CD8-positive, alpha-beta T cell (primary cell): ENCODE measurements at regions of chr11 and their contacts with region 1.

Region 1: GRCh38 chr11:74398244-74399159 is at the start of gene PGM2L1:
- DNase-seq: peak; percentile 85 to 97 (median 95)
- ATAC-seq: peak; percentile 86
- H3K4me3 ChIP-seq: peak within 1 kb of the TSS; percentile 51 to 92
- H3K4me3 Mint-ChIP-seq: peak within 1 kb of the TSS; percentile 99
- H3K27ac ChIP-seq: peak within 1 kb of the TSS; percentile 44 to 58
- H3K27ac Mint-ChIP-seq: peak within 1 kb of the TSS; percentile 96
- H3K4me1 ChIP-seq: peaks cover 10% of the 10 kb centered on the region
- H3K4me1 Mint-ChIP-seq: peaks cover 26% of the 10 kb centered on the region
- H3K27me3 ChIP-seq: no peaks in the 10 kb centered on the region
- H3K27me3 Mint-ChIP-seq: no peaks in the 10 kb centered on the region
- CTCF ChIP-seq: no peak
- total RNA-seq, gene PGM2L1: 5.2 to 5.8 TPM

Region 2: DNA sequence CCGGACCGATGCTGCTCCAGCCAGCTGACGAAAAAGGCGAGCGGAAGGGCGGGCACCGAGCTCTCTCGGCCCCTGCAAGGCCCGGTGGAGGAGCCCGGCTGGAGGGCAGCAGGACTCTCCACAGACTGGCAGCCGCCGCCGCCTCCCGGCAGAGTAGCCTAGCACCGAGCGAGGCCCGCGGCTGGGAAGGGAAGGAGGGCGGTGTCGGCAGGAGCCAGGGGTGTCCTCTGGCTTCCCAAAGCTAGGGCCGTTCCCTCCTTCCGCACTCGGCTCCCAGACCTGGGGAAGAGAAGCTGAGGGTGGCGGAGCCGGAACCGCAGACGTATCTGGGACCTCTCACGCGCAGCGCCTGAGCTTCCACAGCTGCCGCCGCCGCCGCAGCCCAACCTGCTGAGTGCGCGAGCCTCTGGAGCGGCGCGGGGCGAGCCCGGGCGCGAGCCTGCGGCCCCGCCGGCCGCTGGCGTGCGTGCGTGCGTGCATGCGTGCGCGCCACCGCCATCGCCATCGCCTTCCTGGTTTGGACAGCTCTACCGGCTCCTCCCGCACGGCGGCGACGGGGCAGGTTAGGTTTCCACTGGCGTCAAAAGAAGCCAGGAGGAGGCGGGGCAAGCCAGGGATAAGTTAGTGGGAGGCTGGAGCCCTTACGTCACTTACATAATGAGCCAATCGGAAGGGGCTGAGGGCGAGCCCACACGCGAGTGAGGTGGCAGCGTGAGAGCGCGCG is 637.7 kb before region 1 on chr11 and contains the start of gene RAB6A:
- CTCF ChIA-PET with region 1: no interaction called
- POLR2A ChIA-PET with region 1: no interaction called
- intact Hi-C with region 1: loop called in 1 of 2 experiments (anchors 5 kb)
- DNase-seq: peak; percentile 99 to 100 (median 99)
- ATAC-seq: peak; percentile 93
- H3K4me3 ChIP-seq: peak within 1 kb of the TSS; percentile 69 to 93
- H3K4me3 Mint-ChIP-seq: peak within 1 kb of the TSS; percentile 85
- H3K27ac ChIP-seq: peak within 1 kb of the TSS; percentile 71 to 90
- H3K27ac Mint-ChIP-seq: peak within 1 kb of the TSS; percentile 95
- H3K4me1 ChIP-seq: peaks cover 17% of the 10 kb centered on the region
- H3K4me1 Mint-ChIP-seq: peaks cover 29% of the 10 kb centered on the region
- H3K27me3 ChIP-seq: no peaks in the 10 kb centered on the region
- H3K27me3 Mint-ChIP-seq: no peaks in the 10 kb centered on the region
- CTCF ChIP-seq: peak; percentile 24
- total RNA-seq, gene RAB6A: 43.7 to 53.3 TPM

Region 3: GRCh38 chr11:73779084-73779902 is 619.2 kb before region 1 on chr11:
- CTCF ChIA-PET with region 1: no interaction called
- POLR2A ChIA-PET with region 1: no interaction called
- intact Hi-C with region 1: loop called in 1 of 2 experiments (anchors 5 kb)
- DNase-seq: peak; percentile 95 to 99 (median 97)
- ATAC-seq: peak; percentile 97
- H3K4me3 ChIP-seq: peak overlapping the region; percentile 52 to 62
- H3K4me3 Mint-ChIP-seq: peak overlapping the region; percentile 97
- H3K27ac ChIP-seq: peak overlapping the region; percentile 83 to 97
- H3K27ac Mint-ChIP-seq: peak overlapping the region; percentile 100
- H3K4me1 ChIP-seq: peaks cover 4% of the 10 kb centered on the region
- H3K4me1 Mint-ChIP-seq: peaks cover 16% of the 10 kb centered on the region
- H3K27me3 ChIP-seq: no peaks in the 10 kb centered on the region
- H3K27me3 Mint-ChIP-seq: no peaks in the 10 kb centered on the region
- CTCF ChIP-seq: no peak

Region 4: GRCh38 chr11:74592441-74593362 is 194.2 kb after region 1 on chr11 and contains the start of gene POLD3:
- CTCF ChIA-PET with region 1: no interaction called
- POLR2A ChIA-PET with region 1: interaction called, 7 read pairs
- intact Hi-C with region 1: loop called (anchors 1 to 2 kb)
- DNase-seq: peak; percentile 88 to 96 (median 92)
- ATAC-seq: peak; percentile 94
- H3K4me3 ChIP-seq: peak within 1 kb of the TSS; percentile 88 to 100
- H3K4me3 Mint-ChIP-seq: peak within 1 kb of the TSS; percentile 99
- H3K27ac ChIP-seq: peak within 1 kb of the TSS; percentile 82 to 91
- H3K27ac Mint-ChIP-seq: peak within 1 kb of the TSS; percentile 97
- H3K4me1 ChIP-seq: peaks cover 11% of the 10 kb centered on the region
- H3K4me1 Mint-ChIP-seq: peaks cover 19% of the 10 kb centered on the region
- H3K27me3 ChIP-seq: no peaks in the 10 kb centered on the region
- H3K27me3 Mint-ChIP-seq: no peaks in the 10 kb centered on the region
- CTCF ChIP-seq: no peak
- total RNA-seq, gene POLD3: 4.0 TPM

Region 5: GRCh38 chr11:75022759-75023396 is 624.4 kb after region 1 on chr11:
- CTCF ChIA-PET with region 1: no interaction called
- POLR2A ChIA-PET with region 1: no interaction called
- intact Hi-C with region 1: no loop called
- DNase-seq: peak; percentile 55 to 82 (median 71)
- ATAC-seq: peak; percentile 87
- H3K4me3 ChIP-seq: no peak overlapping the region
- H3K4me3 Mint-ChIP-seq: no peak overlapping the region
- H3K27ac ChIP-seq: no peak overlapping the region
- H3K27ac Mint-ChIP-seq: no peak overlapping the region
- H3K4me1 ChIP-seq: no peaks in the 10 kb centered on the region
- H3K4me1 Mint-ChIP-seq: no peaks in the 10 kb centered on the region
- H3K27me3 ChIP-seq: no peaks in the 10 kb centered on the region
- H3K27me3 Mint-ChIP-seq: no peaks in the 10 kb centered on the region
- CTCF ChIP-seq: peak; percentile 95

Region 6: GRCh38 chr11:75582895-75583717 is 1184.6 kb after region 1 on chr11:
- CTCF ChIA-PET with region 1: no interaction called
- POLR2A ChIA-PET with region 1: no interaction called
- intact Hi-C with region 1: loop called in 1 of 2 experiments (anchors 5 kb)
- DNase-seq: peak in 8 of 9 experiments; percentile 7 to 81 (median 62)
- ATAC-seq: peak; percentile 95
- H3K4me3 ChIP-seq: peak overlapping the region; percentile 66 to 73
- H3K4me3 Mint-ChIP-seq: peak overlapping the region; percentile 87
- H3K27ac ChIP-seq: peak overlapping the region; percentile 53 to 68
- H3K27ac Mint-ChIP-seq: peak overlapping the region; percentile 84
- H3K4me1 ChIP-seq: peaks cover 9% of the 10 kb centered on the region
- H3K4me1 Mint-ChIP-seq: peaks cover 20% of the 10 kb centered on the region
- H3K27me3 ChIP-seq: no peaks in the 10 kb centered on the region
- H3K27me3 Mint-ChIP-seq: no peaks in the 10 kb centered on the region
- CTCF ChIP-seq: no peak